ENCODE measurements at regions of chr7 and their contacts with region 1.

Region 1: DNA sequence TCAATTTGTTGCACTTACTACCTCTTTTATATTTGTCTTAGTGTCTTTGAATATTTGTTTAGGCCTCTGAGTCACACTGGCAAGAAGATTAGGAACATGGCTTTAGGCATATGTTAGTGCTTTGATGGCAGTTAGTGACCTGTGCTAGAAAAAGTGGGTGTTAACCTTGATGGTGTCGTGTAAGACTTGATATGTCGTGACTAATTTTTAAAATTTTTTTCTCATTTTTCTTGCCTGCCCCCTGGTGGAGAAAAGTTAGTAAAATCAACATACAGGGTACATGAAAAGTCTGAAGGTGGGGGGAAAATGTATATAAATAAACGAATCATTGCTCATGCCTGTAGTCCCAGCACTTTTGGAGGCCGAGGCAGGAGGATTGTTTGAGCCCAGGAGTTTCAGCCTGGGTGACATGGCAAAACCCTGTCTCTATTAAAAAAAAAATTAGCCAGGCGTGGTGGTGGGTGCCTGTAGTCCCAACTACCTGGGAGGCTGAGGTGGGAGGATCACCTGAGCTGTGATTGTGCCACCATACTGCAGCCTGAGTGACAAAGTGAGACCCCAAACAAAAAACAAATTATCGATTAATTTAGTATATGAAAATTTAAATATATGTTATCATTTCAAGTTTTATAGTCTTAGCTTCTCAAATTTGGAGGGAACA is 44.6 kb downstream of the TAX1BP1 start:
- DNase-seq: no peak
- ATAC-seq: peak; percentile 40
- H3K4me3 Mint-ChIP-seq: no peak overlapping the region
- H3K27ac Mint-ChIP-seq: no peak overlapping the region
- H3K4me1 Mint-ChIP-seq: peaks cover 3% of the 10 kb centered on the region
- H3K27me3 Mint-ChIP-seq: no peaks in the 10 kb centered on the region
- CTCF ChIP-seq: no peak

Region 2: DNA sequence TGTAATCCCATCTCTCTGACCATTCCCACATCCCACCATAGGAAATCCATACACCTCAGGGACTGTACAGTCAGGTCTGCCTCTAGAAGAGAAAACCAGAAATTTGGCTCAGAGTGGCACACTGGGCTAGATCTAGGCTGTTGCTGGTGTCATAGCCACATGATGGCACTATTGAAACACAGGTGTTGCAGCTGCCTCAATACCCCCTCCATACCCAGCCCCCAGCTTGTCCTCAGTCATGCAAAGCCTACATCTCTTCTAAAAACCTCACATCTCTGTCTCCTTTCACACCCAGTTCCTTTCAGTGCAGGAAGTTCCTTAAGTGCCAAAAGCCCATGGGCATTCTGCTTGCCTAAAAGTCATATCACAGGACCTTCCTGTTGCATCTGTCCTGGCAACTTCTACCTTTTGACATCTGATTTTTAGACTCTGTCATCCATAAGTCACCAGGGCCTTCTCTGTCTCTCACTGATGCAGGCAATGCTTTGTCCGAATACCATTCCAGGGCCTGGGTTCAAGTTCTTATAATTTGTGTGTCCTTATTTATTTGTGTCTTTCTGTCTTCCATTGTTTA is 94.8 kb before region 1 on chr7:
- CTCF ChIA-PET with region 1: interaction called, 3 read pairs
- POLR2A ChIA-PET with region 1: no interaction called
- intact Hi-C with region 1: loop called (anchors 1 kb)
- DNase-seq: no peak
- ATAC-seq: peak; percentile 62
- H3K4me3 Mint-ChIP-seq: no peak overlapping the region
- H3K27ac Mint-ChIP-seq: no peak overlapping the region
- H3K4me1 Mint-ChIP-seq: peaks cover 3% of the 10 kb centered on the region
- H3K27me3 Mint-ChIP-seq: no peaks in the 10 kb centered on the region
- CTCF ChIP-seq: no peak

Region 3: DNA sequence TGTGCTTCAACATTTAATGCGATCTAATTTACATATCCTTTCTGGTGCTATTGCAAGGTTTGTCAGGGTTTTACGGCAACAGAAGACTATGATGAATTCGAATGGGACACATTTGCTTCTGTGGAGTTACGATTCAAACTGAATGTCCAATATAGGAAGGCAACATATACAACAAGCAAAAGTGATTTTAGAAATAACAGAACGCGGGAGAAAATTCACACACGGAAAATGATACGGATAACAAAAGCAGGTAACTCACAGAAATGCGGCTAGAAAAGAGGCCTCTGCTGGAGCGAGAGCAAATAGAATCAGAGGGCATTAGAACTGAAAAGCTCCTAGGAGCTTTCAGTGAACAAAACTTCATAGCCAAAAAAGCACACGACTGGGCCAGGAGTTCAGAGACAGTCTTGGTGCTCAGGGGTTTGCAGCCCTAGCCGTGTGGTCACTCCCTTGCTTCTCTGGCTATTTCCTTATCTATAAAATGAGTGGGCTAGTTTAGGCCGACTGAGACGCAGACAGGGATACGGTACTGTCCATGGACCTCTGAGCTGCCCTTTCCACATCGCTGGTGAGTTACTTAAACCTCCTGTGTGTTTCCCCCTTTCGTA is 45.1 kb before region 1 on chr7:
- CTCF ChIA-PET with region 1: no interaction called
- POLR2A ChIA-PET with region 1: no interaction called
- intact Hi-C with region 1: no loop called
- DNase-seq: no peak
- ATAC-seq: peak; percentile 13
- H3K4me3 Mint-ChIP-seq: peak overlapping the region; percentile 95
- H3K27ac Mint-ChIP-seq: peak overlapping the region; percentile 96
- H3K4me1 Mint-ChIP-seq: peaks cover 33% of the 10 kb centered on the region
- H3K27me3 Mint-ChIP-seq: no peaks in the 10 kb centered on the region
- CTCF ChIP-seq: no peak

Region 4: GRCh38 chr7:27751888-27752660 is 32.4 kb before region 1 on chr7:
- CTCF ChIA-PET with region 1: no interaction called
- POLR2A ChIA-PET with region 1: no interaction called
- intact Hi-C with region 1: no loop called
- DNase-seq: no peak
- ATAC-seq: no peak
- H3K4me3 Mint-ChIP-seq: no peak overlapping the region
- H3K27ac Mint-ChIP-seq: no peak overlapping the region
- H3K4me1 Mint-ChIP-seq: peaks cover 6% of the 10 kb centered on the region
- H3K27me3 Mint-ChIP-seq: no peaks in the 10 kb centered on the region
- CTCF ChIP-seq: no peak

Region 5: GRCh38 chr7:28020302-28020940 is 235.9 kb after region 1 on chr7:
- CTCF ChIA-PET with region 1: interaction called, 6 read pairs
- POLR2A ChIA-PET with region 1: no interaction called
- intact Hi-C with region 1: loop called (anchors 1 kb)
- DNase-seq: no peak
- ATAC-seq: peak; percentile 77
- H3K4me3 Mint-ChIP-seq: no peak overlapping the region
- H3K27ac Mint-ChIP-seq: no peak overlapping the region
- H3K4me1 Mint-ChIP-seq: peaks cover 9% of the 10 kb centered on the region
- H3K27me3 Mint-ChIP-seq: no peaks in the 10 kb centered on the region
- CTCF ChIP-seq: no peak